Activated naive CD4-positive, alpha-beta T cell treated with anti-CD3 and anti-CD28 coated beads for 36 hours (primary cell): ENCODE measurements at regions of chr12 and their contacts with region 1.

Region 1: DNA sequence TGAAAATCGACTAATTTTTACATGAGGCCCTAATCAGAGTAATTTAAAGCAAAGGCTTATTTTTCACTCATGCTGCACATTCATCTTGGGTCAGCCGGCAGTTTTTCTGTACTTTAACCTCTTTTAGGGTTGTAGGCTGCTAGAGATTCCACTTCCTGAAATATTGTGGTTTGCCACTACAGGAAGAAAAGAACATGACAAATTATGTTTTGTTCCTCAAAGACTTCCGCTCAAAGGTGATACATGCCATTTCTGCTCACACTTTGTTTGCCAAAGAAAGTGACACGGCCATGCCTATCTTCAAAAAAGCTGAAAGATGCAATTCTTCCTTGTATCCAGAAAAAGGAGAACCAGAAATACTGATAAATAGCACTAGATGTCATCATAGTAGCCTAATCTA is 183.4 kb upstream of the PPFIA2 start:
- DNase-seq: peak; percentile 6
- H3K4me3 Mint-ChIP-seq: no peak overlapping the region
- H3K27ac Mint-ChIP-seq: no peak overlapping the region
- H3K4me1 Mint-ChIP-seq: peaks cover 37% of the 10 kb centered on the region
- H3K27me3 Mint-ChIP-seq: no peaks in the 10 kb centered on the region

Region 2: GRCh38 chr12:81668475-81668874 is 274.1 kb before region 1 on chr12:
- CTCF ChIA-PET with region 1: no interaction called
- intact Hi-C with region 1: loop called (anchors 5 kb)
- DNase-seq: peak; percentile 34
- H3K4me3 Mint-ChIP-seq: no peak overlapping the region
- H3K27ac Mint-ChIP-seq: no peak overlapping the region
- H3K4me1 Mint-ChIP-seq: peaks cover 7% of the 10 kb centered on the region
- H3K27me3 Mint-ChIP-seq: peaks cover 8% of the 10 kb centered on the region

Region 3: DNA sequence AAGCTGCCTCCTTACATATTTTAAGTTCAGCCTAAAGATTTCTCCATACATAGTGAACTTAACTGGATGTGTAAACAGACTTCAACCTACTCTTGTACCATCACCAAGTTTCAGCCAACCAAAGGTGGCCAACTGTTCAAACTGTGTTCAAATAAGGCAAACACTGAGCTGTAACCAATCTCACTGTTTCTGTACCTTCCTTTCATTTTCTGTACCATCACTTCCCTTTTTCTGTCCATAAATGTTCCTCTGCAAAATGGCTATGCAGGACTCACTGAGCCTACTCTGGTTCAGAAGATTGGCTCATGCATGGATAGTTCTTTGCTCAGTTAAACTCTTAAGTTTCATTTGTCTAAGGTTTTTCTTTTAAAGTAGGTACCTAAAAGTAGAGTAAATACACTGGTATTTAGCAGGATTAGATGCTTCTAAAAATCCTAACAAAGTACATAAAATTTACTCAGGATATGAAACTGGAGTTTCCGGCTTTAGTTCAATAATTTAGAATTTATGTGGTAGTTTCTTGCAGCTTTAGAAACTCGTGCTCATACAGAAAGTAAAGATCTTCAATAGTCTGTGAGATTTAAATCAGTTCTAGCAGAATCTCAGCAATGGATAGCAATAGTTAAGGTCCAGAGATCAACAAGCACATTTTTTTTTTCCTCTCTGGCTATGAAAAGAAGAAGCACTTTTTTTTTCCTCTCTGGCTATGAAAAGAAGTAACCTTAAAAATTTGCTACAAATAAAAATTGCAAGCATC is 98.6 kb after region 1 on chr12:
- CTCF ChIA-PET with region 1: no interaction called
- intact Hi-C with region 1: no loop called
- DNase-seq: no peak
- H3K4me3 Mint-ChIP-seq: no peak overlapping the region
- H3K27ac Mint-ChIP-seq: no peak overlapping the region
- H3K4me1 Mint-ChIP-seq: no peaks in the 10 kb centered on the region
- H3K27me3 Mint-ChIP-seq: peaks cover 9% of the 10 kb centered on the region